ENCODE measurements at regions of chr19 and their contacts with region 1.

Region 1: DNA sequence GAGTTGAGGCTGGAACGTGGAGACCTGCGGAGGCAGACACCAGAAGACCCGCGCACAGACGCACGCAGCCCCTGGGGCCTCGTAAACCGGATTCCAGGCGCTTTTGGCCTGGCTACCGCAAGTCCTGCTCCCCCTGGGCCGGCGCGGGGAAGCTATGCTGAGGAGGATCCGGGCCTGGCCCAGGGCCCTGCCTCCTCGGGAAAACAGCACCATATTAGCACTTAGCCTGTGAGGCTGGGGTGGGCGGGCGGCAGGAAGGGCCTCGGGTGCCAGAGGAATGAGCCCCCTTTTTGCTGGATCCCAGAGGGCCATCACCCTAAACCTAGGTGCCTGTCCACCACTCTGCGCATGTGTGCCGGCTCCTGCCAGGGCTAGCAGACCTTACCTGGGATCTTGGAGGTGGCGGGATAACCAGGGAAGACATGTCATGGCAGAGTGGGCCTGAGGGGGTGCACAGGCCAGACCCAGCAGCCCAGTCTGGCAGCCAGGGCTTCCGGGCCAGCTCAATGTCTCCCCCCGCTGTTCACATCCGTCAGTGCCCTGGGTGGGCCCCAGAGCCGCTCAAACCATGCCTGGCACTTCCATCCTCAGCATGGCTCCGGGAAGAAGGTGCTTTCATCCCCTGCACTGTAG is 7.3 kb downstream of the ELOF1 start:
- DNase-seq: no peak
- H3K4me3 ChIP-seq: no peak overlapping the region
- CTCF ChIP-seq: peak; percentile 68

Region 2: DNA sequence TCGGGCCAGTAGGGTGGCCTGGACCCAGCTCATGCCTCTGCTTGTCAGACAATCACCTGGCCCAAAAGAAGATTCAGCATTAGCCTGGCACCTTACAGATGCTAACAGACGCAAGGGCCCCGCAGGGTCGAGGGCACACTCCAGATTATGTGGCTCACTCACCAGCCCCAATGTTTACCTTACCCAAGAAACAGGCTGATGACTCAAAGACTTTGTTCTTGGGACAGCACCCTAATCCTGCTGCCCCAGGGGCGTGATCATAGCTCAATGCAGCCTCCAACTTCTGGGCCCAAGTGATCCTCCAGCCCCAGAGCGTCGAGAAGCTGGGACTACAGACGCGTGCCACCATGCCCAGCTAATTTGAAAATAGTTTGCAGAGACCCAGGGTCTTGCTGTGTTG is 32.6 kb before region 1 on chr19:
- CTCF ChIA-PET with region 1: no interaction called
- POLR2A ChIA-PET with region 1: no interaction called
- DNase-seq: no peak
- H3K4me3 ChIP-seq: no peak overlapping the region
- CTCF ChIP-seq: no peak

Region 3: GRCh38 chr19:11535792-11536595 is 15.7 kb before region 1 on chr19:
- CTCF ChIA-PET with region 1: interaction called, 31 read pairs
- POLR2A ChIA-PET with region 1: interaction called, 5 read pairs
- DNase-seq: no peak
- H3K4me3 ChIP-seq: peak overlapping the region; percentile 51
- CTCF ChIP-seq: peak; percentile 89

Region 4: GRCh38 chr19:11581740-11582139 is 30.0 kb after region 1 on chr19:
- CTCF ChIA-PET with region 1: no interaction called
- POLR2A ChIA-PET with region 1: no interaction called
- DNase-seq: no peak
- H3K4me3 ChIP-seq: no peak overlapping the region
- CTCF ChIP-seq: no peak